ENCODE measurements at regions of chr11 and their contacts with region 1.

Region 1: DNA sequence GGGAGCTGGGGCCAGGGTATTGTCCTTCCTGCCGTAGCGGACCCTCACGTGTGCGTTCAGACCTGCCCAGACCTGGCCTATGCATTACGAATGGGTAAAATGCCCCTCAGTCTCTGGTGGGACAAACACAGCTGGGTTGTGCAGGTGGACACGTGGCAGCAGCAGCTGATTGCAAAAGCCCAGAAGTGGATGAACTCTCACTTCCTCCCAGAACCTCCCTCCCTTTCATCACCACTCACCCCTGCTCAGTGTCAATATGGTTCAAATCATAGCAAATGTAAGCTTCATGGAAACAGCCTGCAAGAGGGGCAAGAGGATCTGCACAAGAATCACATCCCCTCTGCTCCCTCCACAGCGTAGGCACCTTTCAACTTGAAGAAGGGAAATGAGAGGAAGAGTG is 352.1 kb downstream of the OPCML start:
- DNase-seq: no peak
- ATAC-seq: no peak
- H3K4me3 ChIP-seq: no peak overlapping the region
- H3K27ac ChIP-seq: no peak overlapping the region
- H3K4me1 ChIP-seq: no peaks in the 10 kb centered on the region
- H3K27me3 ChIP-seq: no peaks in the 10 kb centered on the region
- CTCF ChIP-seq: no peak
- POLR2A ChIP-seq: no peak
- RAD21 ChIP-seq: no peak

Region 2: DNA sequence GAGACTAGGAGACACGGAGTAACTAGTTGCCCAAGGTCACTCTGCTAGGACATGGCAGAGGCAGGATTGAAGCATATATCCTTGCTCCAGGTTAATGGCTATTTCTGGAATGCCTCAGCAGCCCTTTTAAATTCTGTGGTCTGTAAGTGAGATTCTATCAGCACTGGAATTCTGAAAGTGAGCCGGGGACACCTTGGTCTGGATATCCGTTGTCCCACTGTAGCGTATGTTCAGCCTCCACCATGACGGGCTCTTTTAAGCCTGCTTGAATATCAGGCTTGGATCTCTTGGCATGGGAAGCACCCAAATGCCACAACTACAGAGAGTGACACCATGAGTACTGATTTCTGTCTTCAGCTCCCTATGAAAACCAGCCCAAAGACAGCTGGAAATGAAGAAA is 97.7 kb after region 1 on chr11:
- CTCF ChIA-PET with region 1: no interaction called
- POLR2A ChIA-PET with region 1: no interaction called
- RAD21 ChIA-PET with region 1: no interaction called
- intact Hi-C with region 1: loop called (anchors 5 kb)
- DNase-seq: no peak
- ATAC-seq: no peak
- H3K4me3 ChIP-seq: no peak overlapping the region
- H3K27ac ChIP-seq: no peak overlapping the region
- H3K4me1 ChIP-seq: no peaks in the 10 kb centered on the region
- H3K27me3 ChIP-seq: no peaks in the 10 kb centered on the region
- CTCF ChIP-seq: no peak
- POLR2A ChIP-seq: no peak
- RAD21 ChIP-seq: no peak

Region 3: DNA sequence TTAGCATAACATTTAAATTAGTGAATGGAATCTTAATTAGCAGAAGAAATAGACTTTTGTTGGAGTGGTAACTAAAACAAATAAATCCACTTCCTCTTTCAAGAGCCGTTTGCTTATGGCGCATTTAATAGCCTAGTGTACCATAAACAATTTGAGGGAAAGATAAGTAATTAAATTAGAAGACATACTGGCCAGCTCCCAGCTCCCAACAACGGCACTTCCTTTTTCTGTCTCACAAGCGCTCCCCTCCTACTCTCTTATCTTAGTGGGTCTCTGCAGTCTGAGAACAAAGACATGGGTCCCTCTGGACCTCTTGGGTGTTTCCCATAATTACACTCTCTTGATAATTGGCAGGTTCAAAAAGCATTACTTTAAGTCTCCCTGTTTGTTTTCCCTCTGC is 206.1 kb after region 1 on chr11:
- CTCF ChIA-PET with region 1: no interaction called
- POLR2A ChIA-PET with region 1: no interaction called
- RAD21 ChIA-PET with region 1: no interaction called
- intact Hi-C with region 1: no loop called
- DNase-seq: no peak
- ATAC-seq: no peak
- H3K4me3 ChIP-seq: no peak overlapping the region
- H3K27ac ChIP-seq: no peak overlapping the region
- H3K4me1 ChIP-seq: no peaks in the 10 kb centered on the region
- H3K27me3 ChIP-seq: no peaks in the 10 kb centered on the region
- CTCF ChIP-seq: no peak
- POLR2A ChIP-seq: no peak
- RAD21 ChIP-seq: no peak

Region 4: GRCh38 chr11:133842053-133842452 is 661.9 kb after region 1 on chr11:
- CTCF ChIA-PET with region 1: no interaction called
- POLR2A ChIA-PET with region 1: no interaction called
- RAD21 ChIA-PET with region 1: no interaction called
- intact Hi-C with region 1: no loop called
- DNase-seq: no peak
- ATAC-seq: peak; percentile 20; the same call in 1 of the 2 replicates
- H3K4me3 ChIP-seq: no peak overlapping the region
- H3K27ac ChIP-seq: no peak overlapping the region
- H3K4me1 ChIP-seq: peaks cover 0 to 6% of the 10 kb centered on the region in 2 experiments; a peak in 1 of 4 replicates
- H3K27me3 ChIP-seq: peaks cover 15% of the 10 kb centered on the region; the same call in 1 of the 2 replicates
- CTCF ChIP-seq: no peak
- POLR2A ChIP-seq: no peak
- RAD21 ChIP-seq: no peak